ENCODE measurements at regions of chr15 and their contacts with region 1.

Region 1: GRCh38 chr15:35309886-35310285 is 224.8 kb upstream of the NANOGP8 start:
- DNase-seq: no peak
- ATAC-seq: no peak
- H3K4me3 ChIP-seq: no peak overlapping the region
- H3K27ac ChIP-seq: no peak overlapping the region
- H3K4me1 ChIP-seq: peaks cover 2% of the 10 kb centered on the region
- H3K27me3 ChIP-seq: no peaks in the 10 kb centered on the region

Region 2: GRCh38 chr15:35078221-35078915 is 231.5 kb before region 1 on chr15:
- intact Hi-C with region 1: no loop called
- DNase-seq: no peak
- ATAC-seq: peak in 1 of 2 donors; percentile 55
- H3K4me3 ChIP-seq: no peak overlapping the region
- H3K27ac ChIP-seq: no peak overlapping the region
- H3K4me1 ChIP-seq: no peaks in the 10 kb centered on the region
- H3K27me3 ChIP-seq: no peaks in the 10 kb centered on the region

Region 3: GRCh38 chr15:35437157-35437556 is 127.3 kb after region 1 on chr15:
- intact Hi-C with region 1: loop called in 1 of 4 experiments (anchors 10 kb)
- DNase-seq: no peak
- ATAC-seq: no peak
- H3K4me3 ChIP-seq: no peak overlapping the region
- H3K27ac ChIP-seq: no peak overlapping the region
- H3K4me1 ChIP-seq: no peaks in the 10 kb centered on the region
- H3K27me3 ChIP-seq: no peaks in the 10 kb centered on the region